GM10248 (cell line): ENCODE measurements at regions of chr11 and their contacts with region 1.

Region 1: GRCh38 chr11:50394017-50394416 is 361.3 kb downstream of the OR4C45 start:
- DNase-seq: no peak
- CTCF ChIP-seq: no peak

Region 2: DNA sequence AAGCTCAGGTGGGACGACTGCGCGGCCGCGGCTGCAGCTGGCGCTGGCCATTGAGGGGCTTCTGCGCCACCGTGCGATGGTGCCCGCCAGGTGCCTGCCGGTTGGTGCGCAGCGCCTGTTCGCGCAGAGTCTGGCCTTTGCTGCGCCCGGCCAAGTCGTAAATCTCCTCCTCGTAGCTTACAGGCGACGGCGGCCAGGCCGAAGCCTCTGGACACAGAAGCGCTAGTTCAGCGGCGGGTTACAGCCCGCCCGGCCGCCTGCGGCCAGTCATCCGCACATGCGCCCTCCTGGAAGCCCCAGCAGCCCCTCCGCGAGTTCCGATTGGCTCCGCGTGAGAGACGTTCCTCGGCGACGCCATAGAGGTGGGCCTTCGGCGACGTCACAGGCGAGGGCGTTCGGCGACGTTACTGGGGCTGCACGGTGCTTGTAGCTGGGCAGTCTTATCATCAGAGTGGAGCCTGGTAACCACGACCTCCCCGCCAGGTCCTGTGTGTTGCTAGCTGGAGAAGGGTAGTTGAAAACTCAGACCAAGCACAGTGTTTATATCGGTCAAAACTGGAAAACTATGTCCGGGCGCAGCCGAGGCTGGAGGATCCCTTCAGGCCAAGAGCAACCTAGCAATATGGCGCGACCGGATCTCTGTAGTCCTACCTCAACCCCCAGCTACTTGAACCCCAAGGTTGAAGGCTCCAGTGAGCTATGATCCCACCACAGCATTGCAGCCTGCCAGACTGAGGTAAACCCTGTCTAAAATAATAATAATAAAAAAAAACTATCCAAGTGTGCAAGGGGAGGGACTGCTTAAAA is 95.6 kb before region 1 on chr11:
- CTCF ChIA-PET with region 1: no interaction called
- POLR2A ChIA-PET with region 1: no interaction called
- DNase-seq: no peak
- CTCF ChIP-seq: no peak

Region 3: GRCh38 chr11:50412832-50413231 is 18.8 kb after region 1 on chr11:
- CTCF ChIA-PET with region 1: interaction called, 10 read pairs
- POLR2A ChIA-PET with region 1: no interaction called
- DNase-seq: no peak
- CTCF ChIP-seq: no peak